CD8-positive, alpha-beta T cell (primary cell): ENCODE measurements at regions of chr2 and their contacts with region 1.

Region 1: GRCh38 chr2:113922784-113923183 is 32.9 kb downstream of the ACTR3 start:
- DNase-seq: no peak
- ATAC-seq: no peak
- H3K4me3 ChIP-seq: no peak overlapping the region
- H3K4me3 Mint-ChIP-seq: no peak overlapping the region
- H3K27ac ChIP-seq: no peak overlapping the region
- H3K27ac Mint-ChIP-seq: no peak overlapping the region
- H3K4me1 ChIP-seq: peaks cover 32% of the 10 kb centered on the region
- H3K4me1 Mint-ChIP-seq: peaks cover 36% of the 10 kb centered on the region
- H3K27me3 ChIP-seq: no peaks in the 10 kb centered on the region
- H3K27me3 Mint-ChIP-seq: no peaks in the 10 kb centered on the region
- CTCF ChIP-seq: no peak

Region 2: GRCh38 chr2:113940891-113941290 is 18.1 kb after region 1 on chr2:
- CTCF ChIA-PET with region 1: no interaction called
- POLR2A ChIA-PET with region 1: no interaction called
- intact Hi-C with region 1: loop called in 1 of 2 experiments (anchors 2 kb)
- DNase-seq: no peak
- ATAC-seq: no peak
- H3K4me3 ChIP-seq: no peak overlapping the region
- H3K4me3 Mint-ChIP-seq: no peak overlapping the region
- H3K27ac ChIP-seq: no peak overlapping the region
- H3K27ac Mint-ChIP-seq: no peak overlapping the region
- H3K4me1 ChIP-seq: no peaks in the 10 kb centered on the region
- H3K4me1 Mint-ChIP-seq: peaks cover 9% of the 10 kb centered on the region
- H3K27me3 ChIP-seq: no peaks in the 10 kb centered on the region
- H3K27me3 Mint-ChIP-seq: no peaks in the 10 kb centered on the region
- CTCF ChIP-seq: no peak

Region 3: DNA sequence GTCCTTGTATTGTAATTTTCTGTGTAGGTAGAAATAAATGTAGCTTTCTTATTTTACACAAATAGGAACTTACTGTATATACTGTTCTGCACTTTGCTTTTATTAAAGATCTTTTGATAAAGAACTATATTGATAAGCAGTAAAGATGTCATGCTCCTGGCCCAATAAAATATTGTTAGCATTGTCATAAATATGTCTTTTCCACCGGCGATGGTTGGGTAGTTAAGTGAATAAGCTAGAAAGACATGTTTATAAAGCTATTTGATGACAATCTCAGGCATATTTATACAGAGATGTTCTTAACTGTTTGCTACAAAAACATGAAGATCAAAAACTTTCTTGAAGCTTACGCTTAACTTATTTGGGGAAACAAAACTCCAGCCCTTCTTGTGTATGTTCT is 36.4 kb after region 1 on chr2:
- CTCF ChIA-PET with region 1: no interaction called
- POLR2A ChIA-PET with region 1: no interaction called
- intact Hi-C with region 1: loop called in 1 of 2 experiments (anchors 5 kb)
- DNase-seq: no peak
- ATAC-seq: no peak
- H3K4me3 ChIP-seq: no peak overlapping the region
- H3K4me3 Mint-ChIP-seq: no peak overlapping the region
- H3K27ac ChIP-seq: no peak overlapping the region
- H3K27ac Mint-ChIP-seq: peak overlapping the region; percentile 66
- H3K4me1 ChIP-seq: no peaks in the 10 kb centered on the region
- H3K4me1 Mint-ChIP-seq: peaks cover 4% of the 10 kb centered on the region
- H3K27me3 ChIP-seq: no peaks in the 10 kb centered on the region
- H3K27me3 Mint-ChIP-seq: no peaks in the 10 kb centered on the region
- CTCF ChIP-seq: no peak